Activated CD8-positive, alpha-beta T cell treated with anti-CD3 and anti-CD28 coated beads, Interleukin-2, amount 10 ng/mL, durations not matched to agents 7 days and 5 days (primary cell): ENCODE measurements at regions of chr4 and their contacts with region 1.

Region 1: DNA sequence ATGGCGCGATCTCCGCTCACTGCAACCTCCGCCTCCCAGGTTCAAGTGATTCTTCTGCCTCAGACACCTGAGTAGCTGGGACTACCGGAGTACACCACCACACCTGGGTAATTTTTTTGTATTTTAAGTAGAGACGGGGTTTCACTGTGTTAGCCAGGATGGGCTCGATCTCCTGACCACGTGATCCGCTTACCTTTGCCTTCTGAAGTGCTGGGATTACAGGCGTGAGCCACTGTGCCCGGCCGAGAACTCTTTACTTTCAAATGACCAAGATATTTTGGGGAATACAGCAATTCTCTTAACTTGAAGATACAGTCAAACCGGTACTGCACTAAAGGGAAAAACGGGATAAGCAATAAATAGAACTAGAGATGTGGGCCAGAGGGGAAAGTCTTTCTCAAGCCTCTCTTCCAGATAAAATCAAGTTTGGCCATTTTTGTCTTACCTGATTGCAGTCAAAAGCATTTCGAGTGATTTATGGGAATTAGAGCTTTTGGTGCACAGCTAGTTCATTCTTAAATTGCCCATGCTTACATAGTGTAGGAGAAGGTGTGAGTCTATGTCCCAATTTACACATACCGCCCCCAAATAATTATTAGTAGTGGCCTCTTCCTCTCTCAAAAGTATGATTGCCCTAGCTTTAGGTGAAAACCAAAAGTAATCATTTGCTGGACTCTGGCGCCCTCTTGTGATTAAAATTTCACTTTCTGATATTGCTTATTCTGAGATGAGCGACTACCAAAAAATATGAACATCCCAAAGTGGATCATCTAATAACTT is 53.2 kb upstream of the ABCG2 start:
- DNase-seq: peak; percentile 74
- ATAC-seq: peak; percentile 67
- H3K4me3 Mint-ChIP-seq: no peak overlapping the region
- H3K27ac Mint-ChIP-seq: no peak overlapping the region
- H3K4me1 Mint-ChIP-seq: peaks cover 3% of the 10 kb centered on the region
- H3K27me3 Mint-ChIP-seq: peaks cover 10% of the 10 kb centered on the region

Region 2: GRCh38 chr4:87848622-87849351 is 362.9 kb before region 1 on chr4:
- CTCF ChIA-PET with region 1: interaction called, 22 read pairs
- POLR2A ChIA-PET with region 1: no interaction called
- DNase-seq: peak; percentile 57
- ATAC-seq: peak; percentile 94
- H3K4me3 Mint-ChIP-seq: no peak overlapping the region
- H3K27ac Mint-ChIP-seq: no peak overlapping the region
- H3K4me1 Mint-ChIP-seq: peaks cover 10% of the 10 kb centered on the region
- H3K27me3 Mint-ChIP-seq: peaks cover 27% of the 10 kb centered on the region

Region 3: GRCh38 chr4:88033309-88033708 is 178.4 kb before region 1 on chr4:
- CTCF ChIA-PET with region 1: interaction called, 92 read pairs
- POLR2A ChIA-PET with region 1: no interaction called
- DNase-seq: peak; percentile 61
- ATAC-seq: peak; percentile 57
- H3K4me3 Mint-ChIP-seq: no peak overlapping the region
- H3K27ac Mint-ChIP-seq: no peak overlapping the region
- H3K4me1 Mint-ChIP-seq: no peaks in the 10 kb centered on the region
- H3K27me3 Mint-ChIP-seq: no peaks in the 10 kb centered on the region

Region 4: DNA sequence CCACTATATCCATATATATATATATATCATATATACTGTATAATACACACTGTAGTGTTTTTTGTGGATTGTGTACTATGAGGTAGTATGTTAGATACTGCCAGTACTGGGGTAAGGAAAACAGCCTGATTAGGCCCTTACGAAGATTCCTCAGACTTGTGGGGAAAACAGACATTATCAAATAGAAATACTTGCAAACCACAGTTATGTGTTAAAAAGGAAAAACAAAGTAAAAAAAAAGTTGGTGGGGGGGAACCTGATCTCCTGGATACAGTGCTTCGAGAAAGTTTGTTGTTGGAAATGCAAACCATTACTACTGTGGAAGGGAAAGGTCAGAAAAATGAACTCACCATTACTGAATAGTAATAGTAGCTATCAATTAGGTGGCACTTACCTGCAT is 151.2 kb before region 1 on chr4:
- CTCF ChIA-PET with region 1: interaction called, 10 read pairs
- POLR2A ChIA-PET with region 1: no interaction called
- DNase-seq: no peak
- ATAC-seq: no peak
- H3K4me3 Mint-ChIP-seq: no peak overlapping the region
- H3K27ac Mint-ChIP-seq: no peak overlapping the region
- H3K4me1 Mint-ChIP-seq: no peaks in the 10 kb centered on the region
- H3K27me3 Mint-ChIP-seq: no peaks in the 10 kb centered on the region

Region 5: GRCh38 chr4:88077911-88078524 is 133.6 kb before region 1 on chr4:
- CTCF ChIA-PET with region 1: no interaction called
- POLR2A ChIA-PET with region 1: no interaction called
- DNase-seq: no peak
- ATAC-seq: no peak
- H3K4me3 Mint-ChIP-seq: no peak overlapping the region
- H3K27ac Mint-ChIP-seq: no peak overlapping the region
- H3K4me1 Mint-ChIP-seq: no peaks in the 10 kb centered on the region
- H3K27me3 Mint-ChIP-seq: peaks cover 2% of the 10 kb centered on the region

Region 6: GRCh38 chr4:88196523-88197185 is 15.0 kb before region 1 on chr4:
- CTCF ChIA-PET with region 1: interaction called, 14 read pairs
- POLR2A ChIA-PET with region 1: no interaction called
- DNase-seq: no peak
- ATAC-seq: no peak
- H3K4me3 Mint-ChIP-seq: no peak overlapping the region
- H3K27ac Mint-ChIP-seq: no peak overlapping the region
- H3K4me1 Mint-ChIP-seq: no peaks in the 10 kb centered on the region
- H3K27me3 Mint-ChIP-seq: no peaks in the 10 kb centered on the region

Region 7: GRCh38 chr4:88275516-88275915 is 63.9 kb after region 1 on chr4:
- CTCF ChIA-PET with region 1: no interaction called
- POLR2A ChIA-PET with region 1: no interaction called
- DNase-seq: no peak
- ATAC-seq: no peak
- H3K4me3 Mint-ChIP-seq: no peak overlapping the region
- H3K27ac Mint-ChIP-seq: no peak overlapping the region
- H3K4me1 Mint-ChIP-seq: peaks cover 36% of the 10 kb centered on the region
- H3K27me3 Mint-ChIP-seq: no peaks in the 10 kb centered on the region